Naive thymus-derived CD4-positive, alpha-beta T cell (primary cell): ENCODE measurements at regions of chr19 and their contacts with region 1.

Region 1: DNA sequence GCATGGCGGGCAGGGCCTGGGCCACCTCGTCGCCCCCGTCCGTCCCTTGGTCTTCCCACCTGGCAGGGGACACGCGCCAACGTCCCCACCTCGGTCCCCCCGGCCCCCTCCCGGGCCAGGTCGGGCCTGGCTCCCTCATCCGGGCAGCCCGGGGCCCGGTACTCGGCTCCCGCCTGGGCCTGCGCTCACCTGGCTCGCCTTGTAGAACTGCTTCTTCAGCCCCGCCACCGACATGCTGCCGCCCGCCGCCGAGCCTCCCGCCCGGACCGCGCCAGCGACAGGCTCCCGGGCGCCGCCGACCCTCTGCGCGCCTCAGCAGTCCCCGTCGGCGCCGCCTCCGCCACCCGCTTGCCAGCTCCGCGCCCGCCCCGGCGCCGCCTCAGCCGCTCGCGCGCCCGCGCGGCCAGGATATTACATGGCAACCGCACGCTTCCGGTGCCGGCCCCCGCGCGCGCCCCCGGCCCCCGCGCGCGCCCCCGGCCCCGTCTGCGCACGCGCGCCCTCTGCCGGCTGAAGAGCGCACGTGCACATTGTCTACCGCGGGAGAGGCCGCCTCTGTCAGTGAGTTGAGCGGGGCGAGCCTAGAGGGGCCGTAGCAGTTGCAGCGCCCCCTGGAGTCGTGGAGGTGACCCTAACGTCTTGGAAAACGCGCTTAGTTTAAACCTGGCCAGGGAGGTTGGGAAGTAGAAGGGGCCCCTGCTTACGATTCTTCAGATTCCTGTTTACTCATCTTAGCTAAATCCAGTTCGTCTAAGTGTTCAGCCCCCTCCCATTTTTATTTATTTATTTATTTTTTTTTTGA is at the start of gene SH3GL1:
- DNase-seq: peak; percentile 87 to 98 (median 92)
- ATAC-seq: peak; percentile 87
- H3K4me3 ChIP-seq: peak within 1 kb of the TSS; percentile 87
- H3K4me3 Mint-ChIP-seq: peak within 1 kb of the TSS; percentile 80 to 99 (median 92)
- H3K27ac ChIP-seq: peak within 1 kb of the TSS; percentile 97
- H3K27ac Mint-ChIP-seq: peak within 1 kb of the TSS; percentile 87 to 100 (median 99)
- H3K4me1 ChIP-seq: peaks cover 31 to 38% of the 10 kb centered on the region in 2 donors
- H3K4me1 Mint-ChIP-seq: peaks cover 23 to 75% (median 60%) of the 10 kb centered on the region in 7 donors
- H3K27me3 ChIP-seq: no peaks in the 10 kb centered on the region
- H3K27me3 Mint-ChIP-seq: no peaks in the 10 kb centered on the region
- total RNA-seq, gene SH3GL1: 37.1 to 77.0 (median 38.6) TPM

Region 2: DNA sequence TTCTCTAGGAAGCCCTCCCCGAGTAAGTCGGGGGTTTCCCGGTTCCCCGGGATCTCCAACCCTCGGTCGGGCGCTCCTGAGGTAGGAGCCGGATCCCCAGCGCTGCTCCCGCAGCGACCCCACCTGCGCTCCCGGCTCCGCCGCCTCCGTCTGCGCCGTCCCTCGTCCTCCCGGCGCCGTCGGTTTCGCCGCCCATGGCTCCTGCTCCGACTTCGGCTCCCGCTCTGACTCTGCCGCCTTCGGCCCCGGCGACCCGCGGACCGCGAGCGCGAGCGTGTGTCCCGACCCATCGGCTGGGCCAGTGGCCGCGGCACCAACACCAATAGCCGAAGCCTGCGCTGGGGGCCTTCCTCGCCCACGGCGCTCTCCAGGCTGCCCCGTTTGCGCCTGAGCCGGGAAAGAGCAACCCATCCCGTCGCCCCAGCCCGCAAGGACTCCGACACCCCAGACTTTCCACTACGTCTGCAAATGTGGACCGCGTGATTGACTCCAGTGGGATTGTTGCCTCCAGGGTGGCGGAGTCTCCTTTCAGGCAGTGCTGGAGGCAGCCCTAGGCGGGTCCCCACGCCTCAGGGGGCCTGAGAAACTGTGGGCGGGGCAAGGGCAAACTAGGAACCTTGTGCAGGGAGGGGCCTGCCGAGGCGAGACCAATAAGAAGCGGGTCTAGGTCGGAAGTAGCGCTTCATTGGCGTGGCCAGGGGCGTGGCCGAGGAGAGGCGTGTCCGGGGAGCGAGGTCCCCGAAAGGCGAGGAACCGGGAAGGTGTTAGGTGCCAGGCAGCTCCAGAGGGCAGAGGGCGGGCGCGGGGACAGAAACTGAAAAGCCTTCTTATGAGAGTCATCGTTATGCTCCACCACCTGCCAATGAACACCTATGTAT is 773.6 kb before region 1 on chr19 and contains the start of gene CACTIN:
- CTCF ChIA-PET with region 1: no interaction called
- POLR2A ChIA-PET with region 1: no interaction called
- intact Hi-C with region 1: loop called in 1 of 2 experiments (anchors 2 kb)
- DNase-seq: peak; percentile 97 to 100 (median 99)
- ATAC-seq: peak; percentile 99
- H3K4me3 ChIP-seq: peak within 1 kb of the TSS; percentile 73
- H3K4me3 Mint-ChIP-seq: peak within 1 kb of the TSS; percentile 85 to 98 (median 94)
- H3K27ac ChIP-seq: peak within 1 kb of the TSS; percentile 81
- H3K27ac Mint-ChIP-seq: peak within 1 kb of the TSS; percentile 94 to 100 (median 99)
- H3K4me1 ChIP-seq: peaks cover 8 to 16% of the 10 kb centered on the region in 2 donors
- H3K4me1 Mint-ChIP-seq: peaks cover 23 to 43% (median 27%) of the 10 kb centered on the region in 7 donors
- H3K27me3 ChIP-seq: no peaks in the 10 kb centered on the region
- H3K27me3 Mint-ChIP-seq: no peaks in the 10 kb centered on the region
- total RNA-seq, gene CACTIN: 35.4 to 46.7 (median 37.1) TPM

Region 3: DNA sequence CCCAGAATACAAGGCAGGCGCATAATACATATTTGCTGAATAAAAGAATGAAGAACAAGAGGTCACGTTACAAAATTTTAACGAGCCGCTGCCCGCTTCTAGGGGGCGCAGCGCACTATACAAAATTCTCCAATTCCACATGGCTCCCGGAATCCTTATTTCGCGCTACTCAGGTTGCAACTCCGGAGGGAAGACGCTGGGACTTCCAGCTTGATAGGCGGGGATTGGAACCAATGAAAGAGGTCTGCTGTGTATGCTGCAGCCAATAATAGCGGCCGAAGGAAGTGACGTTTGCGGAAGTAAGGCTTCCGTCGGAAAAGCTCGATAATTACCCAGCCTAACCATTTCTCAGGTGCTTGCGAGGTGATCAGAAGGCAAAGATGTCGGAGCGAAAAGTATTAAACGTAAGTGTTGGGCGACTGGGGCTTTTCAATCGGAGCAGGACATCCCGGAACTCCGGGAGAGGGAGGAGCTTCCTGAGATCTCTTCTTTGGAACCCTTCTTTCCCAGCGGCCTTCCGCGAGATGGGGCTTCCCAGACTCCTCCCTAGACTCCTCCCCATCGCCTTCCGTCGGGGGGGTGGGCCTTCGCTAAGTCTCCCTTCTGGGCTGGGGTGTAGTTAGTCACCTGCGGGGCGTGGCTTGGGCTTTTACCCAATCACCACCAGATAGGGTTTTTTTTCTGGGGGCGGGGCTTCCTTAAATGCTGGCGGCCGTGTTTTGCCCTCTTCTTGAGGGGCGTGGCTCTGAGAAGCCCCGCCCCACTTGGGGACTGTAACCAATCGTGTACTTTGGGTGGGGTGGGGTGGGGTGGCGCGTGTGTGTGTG is 153.4 kb before region 1 on chr19 and contains the start of gene YJU2:
- CTCF ChIA-PET with region 1: interaction called, 3 read pairs
- POLR2A ChIA-PET with region 1: interaction called, 12 read pairs
- intact Hi-C with region 1: loop called (anchors 1 kb)
- DNase-seq: peak; percentile 92 to 100 (median 99)
- ATAC-seq: peak; percentile 96
- H3K4me3 ChIP-seq: peak within 1 kb of the TSS; percentile 100
- H3K4me3 Mint-ChIP-seq: peak within 1 kb of the TSS; percentile 85 to 98 (median 96)
- H3K27ac ChIP-seq: peak within 1 kb of the TSS; percentile 99
- H3K27ac Mint-ChIP-seq: peak within 1 kb of the TSS; percentile 97 to 100 (median 99)
- H3K4me1 ChIP-seq: peaks cover 12 to 13% of the 10 kb centered on the region in 2 donors
- H3K4me1 Mint-ChIP-seq: peaks cover 10 to 33% (median 24%) of the 10 kb centered on the region in 7 donors
- H3K27me3 ChIP-seq: no peaks in the 10 kb centered on the region
- H3K27me3 Mint-ChIP-seq: peaks cover 0 to 2% (median 0%) of the 10 kb centered on the region in 5 donors
- total RNA-seq, gene YJU2: 28.5 to 42.1 (median 31.9) TPM

Region 4: GRCh38 chr19:4342615-4343369 is 57.5 kb before region 1 on chr19:
- CTCF ChIA-PET with region 1: interaction called, 5 read pairs
- POLR2A ChIA-PET with region 1: interaction called, 8 read pairs
- intact Hi-C with region 1: loop called (anchors 1 kb)
- DNase-seq: peak; percentile 73 to 98 (median 97)
- ATAC-seq: peak; percentile 88
- H3K4me3 ChIP-seq: peak overlapping the region; percentile 100
- H3K4me3 Mint-ChIP-seq: peak overlapping the region; percentile 88 to 95 (median 92)
- H3K27ac ChIP-seq: peak overlapping the region; percentile 81
- H3K27ac Mint-ChIP-seq: peak overlapping the region; percentile 86 to 97 (median 94)
- H3K4me1 ChIP-seq: peaks cover 8 to 20% of the 10 kb centered on the region in 2 donors
- H3K4me1 Mint-ChIP-seq: peaks cover 20 to 46% (median 30%) of the 10 kb centered on the region in 7 donors
- H3K27me3 ChIP-seq: no peaks in the 10 kb centered on the region
- H3K27me3 Mint-ChIP-seq: peaks cover 0 to 2% (median 0%) of the 10 kb centered on the region in 5 donors

Region 5: GRCh38 chr19:4471403-4472173 is 71.3 kb after region 1 on chr19:
- CTCF ChIA-PET with region 1: no interaction called
- POLR2A ChIA-PET with region 1: interaction called, 3 read pairs
- intact Hi-C with region 1: loop called (anchors 1 kb)
- DNase-seq: peak; percentile 78 to 100 (median 98)
- ATAC-seq: peak; percentile 90
- H3K4me3 ChIP-seq: peak overlapping the region; percentile 71
- H3K4me3 Mint-ChIP-seq: no peak overlapping the region
- H3K27ac ChIP-seq: peak overlapping the region; percentile 77
- H3K27ac Mint-ChIP-seq: no peak overlapping the region
- H3K4me1 ChIP-seq: peaks cover 7 to 12% of the 10 kb centered on the region in 2 donors
- H3K4me1 Mint-ChIP-seq: peaks cover 11 to 25% (median 24%) of the 10 kb centered on the region in 7 donors
- H3K27me3 ChIP-seq: no peaks in the 10 kb centered on the region
- H3K27me3 Mint-ChIP-seq: no peaks in the 10 kb centered on the region

Region 6: GRCh38 chr19:4723367-4724187 is 323.2 kb after region 1 on chr19 and contains the start of gene DPP9:
- CTCF ChIA-PET with region 1: no interaction called
- POLR2A ChIA-PET with region 1: no interaction called
- intact Hi-C with region 1: loop called in 1 of 2 experiments (anchors 1 kb)
- DNase-seq: peak; percentile 84 to 100 (median 99)
- ATAC-seq: peak; percentile 99
- H3K4me3 ChIP-seq: peak within 1 kb of the TSS; percentile 96
- H3K4me3 Mint-ChIP-seq: peak within 1 kb of the TSS; percentile 83 to 99 (median 95)
- H3K27ac ChIP-seq: peak within 1 kb of the TSS; percentile 87
- H3K27ac Mint-ChIP-seq: peak within 1 kb of the TSS; percentile 93 to 100 (median 98)
- H3K4me1 ChIP-seq: peaks cover 19 to 26% of the 10 kb centered on the region in 2 donors
- H3K4me1 Mint-ChIP-seq: peaks cover 21 to 48% (median 37%) of the 10 kb centered on the region in 7 donors
- H3K27me3 ChIP-seq: no peaks in the 10 kb centered on the region
- H3K27me3 Mint-ChIP-seq: peaks cover 0 to 10% (median 5%) of the 10 kb centered on the region in 5 donors
- total RNA-seq, gene DPP9: 71.2 to 90.7 (median 81.4) TPM